ENCODE measurements at regions of chr19 and their contacts with region 1.

Region 1: GRCh38 chr19:58475714-58476497 is at the start of gene ZNF446:
- DNase-seq: peak; percentile 99
- H3K4me3 ChIP-seq: peak within 1 kb of the TSS; percentile 59 to 67
- H3K27ac ChIP-seq: peak within 1 kb of the TSS; percentile 87 to 92
- H3K4me1 ChIP-seq: peaks cover 0 to 24% (median 17%) of the 10 kb centered on the region in 4 donors
- H3K27me3 ChIP-seq: no peaks in the 10 kb centered on the region
- CTCF ChIP-seq: peak in 1 of 2 experiments; percentile 11

Region 2: GRCh38 chr19:58519355-58520256 is 43.7 kb after region 1 on chr19 and contains the start of gene ZBTB45:
- intact Hi-C with region 1: loop called (anchors 5 kb)
- DNase-seq: peak; percentile 91 to 96
- H3K4me3 ChIP-seq: peak within 1 kb of the TSS; percentile 89 to 95
- H3K27ac ChIP-seq: peak within 1 kb of the TSS; percentile 97 to 98
- H3K4me1 ChIP-seq: peaks cover 16 to 49% (median 33%) of the 10 kb centered on the region in 4 donors
- H3K27me3 ChIP-seq: no peaks in the 10 kb centered on the region
- CTCF ChIP-seq: peak; percentile 75 to 77

Region 3: DNA sequence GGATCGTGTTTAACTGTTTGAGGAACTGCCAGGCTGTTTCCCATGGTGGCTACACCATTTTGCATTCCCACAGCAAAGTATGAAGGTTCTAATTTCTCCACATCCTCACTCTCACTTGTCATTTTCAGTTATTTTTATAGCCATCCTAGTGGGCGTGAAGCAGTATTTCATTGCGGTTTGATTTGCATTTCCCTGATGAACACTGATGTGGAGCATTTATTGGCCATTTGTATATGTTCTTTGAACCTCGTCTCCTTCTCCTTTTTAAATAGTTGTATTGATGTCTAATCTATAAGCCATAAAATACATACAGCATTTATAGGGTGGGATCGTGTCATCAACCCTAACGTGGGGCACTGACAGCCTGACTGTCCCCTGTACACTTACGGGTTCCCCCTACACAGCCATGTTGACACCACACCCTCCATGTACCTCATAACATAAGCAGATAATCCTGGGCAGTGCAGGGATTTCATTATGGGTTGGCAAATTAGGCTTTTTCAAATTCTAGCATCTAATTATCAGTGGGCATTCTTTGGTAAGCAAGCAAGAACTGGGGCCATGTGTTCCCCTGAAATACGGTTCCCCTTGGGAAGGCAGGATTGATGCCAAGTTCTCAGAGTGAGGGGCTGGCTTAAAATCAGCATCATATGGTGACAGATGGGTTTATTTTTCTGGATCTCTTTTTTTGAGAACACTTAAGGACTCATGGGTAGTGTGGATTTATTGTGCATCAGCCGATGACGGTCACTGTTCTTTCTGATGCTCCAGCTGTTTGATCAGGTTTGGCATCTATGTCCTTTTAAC is 55.3 kb after region 1 on chr19:
- intact Hi-C with region 1: no loop called
- DNase-seq: no peak
- H3K4me3 ChIP-seq: no peak overlapping the region
- H3K27ac ChIP-seq: no peak overlapping the region
- H3K4me1 ChIP-seq: no peaks in the 10 kb centered on the region
- H3K27me3 ChIP-seq: peaks cover 0 to 16% of the 10 kb centered on the region in 2 donors
- CTCF ChIP-seq: no peak

Measured in tibial artery (tissue), 4 donors.